Mucosa of descending colon (tissue), 3 donors: ENCODE measurements at regions of chr11 and their contacts with region 1.

Region 1: GRCh38 chr11:3109921-3110706 is 52.9 kb upstream of the CARS1 start:
- DNase-seq: peak; percentile 37 to 65 (median 60)
- ATAC-seq: peak; percentile 90
- H3K4me3 ChIP-seq: no peak overlapping the region
- H3K4me1 ChIP-seq: no peaks in the 10 kb centered on the region
- CTCF ChIP-seq: peak; percentile 52

Region 2: GRCh38 chr11:3195251-3196160 is 85.4 kb after region 1 on chr11:
- intact Hi-C with region 1: loop called in 1 of 2 experiments (anchors 10 kb)
- DNase-seq: peak in 1 of 3 donors; percentile 30
- ATAC-seq: peak; percentile 57
- H3K4me3 ChIP-seq: no peak overlapping the region
- H3K4me1 ChIP-seq: no peaks in the 10 kb centered on the region
- CTCF ChIP-seq: no peak